ENCODE measurements at regions of chr12 and their contacts with region 1.

Region 1: DNA sequence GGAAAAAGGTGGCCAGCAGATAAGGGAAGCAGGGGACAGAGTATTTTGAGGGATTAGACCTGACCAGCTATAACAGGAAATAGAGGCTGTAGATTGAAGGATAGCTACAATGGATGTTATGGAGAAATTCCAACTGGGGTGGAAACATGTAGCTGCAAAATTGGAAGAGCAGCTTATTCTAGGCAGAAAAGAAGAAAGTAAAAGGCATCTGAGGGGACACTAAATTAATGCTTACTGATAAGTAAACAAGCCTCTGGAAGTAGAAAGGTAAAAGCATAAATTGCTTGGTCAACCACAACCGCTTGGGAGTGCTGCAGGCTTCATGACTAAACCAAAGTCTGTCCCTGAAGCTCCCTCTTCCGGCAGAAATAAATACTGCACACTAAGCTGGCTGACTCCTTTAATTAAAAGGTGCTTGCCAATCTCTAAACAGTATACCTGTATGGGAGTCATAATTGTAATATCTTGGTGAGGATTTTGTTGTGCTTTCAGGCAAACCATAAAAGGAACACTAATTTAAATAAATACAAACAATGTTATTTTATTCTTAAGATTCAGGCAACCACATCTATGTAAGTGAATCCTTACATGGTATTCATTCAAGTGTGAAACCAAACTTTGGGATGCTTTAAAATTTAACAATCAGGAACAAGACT is 7.7 kb downstream of the UBC start:
- DNase-seq: peak; percentile 86
- H3K4me3 Mint-ChIP-seq: no peak overlapping the region
- H3K27ac Mint-ChIP-seq: peak overlapping the region; percentile 1
- H3K4me1 Mint-ChIP-seq: peaks cover 36% of the 10 kb centered on the region
- H3K27me3 Mint-ChIP-seq: no peaks in the 10 kb centered on the region

Region 2: DNA sequence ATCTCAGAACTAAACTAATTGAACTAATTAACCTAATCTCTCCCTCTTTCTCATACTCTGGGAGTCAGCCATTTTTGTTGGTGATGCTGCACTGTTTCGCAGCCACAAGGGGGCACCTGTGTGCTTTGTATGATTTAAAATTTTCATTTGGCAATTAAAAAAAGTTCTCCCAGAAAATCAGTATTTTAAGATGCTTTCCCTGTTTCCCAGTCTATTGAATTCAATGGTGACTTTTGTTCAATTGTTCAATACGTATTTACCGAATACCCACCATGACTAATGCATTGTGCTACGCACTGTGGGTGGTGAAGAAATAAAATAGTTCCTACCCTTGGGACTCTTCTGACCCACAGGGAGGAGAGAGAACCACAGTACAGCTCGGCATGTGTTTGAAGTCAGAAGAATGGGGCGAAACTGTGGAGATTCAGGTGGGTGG is 870.0 kb before region 1 on chr12:
- intact Hi-C with region 1: loop called (anchors 2 kb)
- DNase-seq: no peak
- H3K4me3 Mint-ChIP-seq: no peak overlapping the region
- H3K27ac Mint-ChIP-seq: no peak overlapping the region
- H3K4me1 Mint-ChIP-seq: no peaks in the 10 kb centered on the region
- H3K27me3 Mint-ChIP-seq: peaks cover 14% of the 10 kb centered on the region

Region 3: DNA sequence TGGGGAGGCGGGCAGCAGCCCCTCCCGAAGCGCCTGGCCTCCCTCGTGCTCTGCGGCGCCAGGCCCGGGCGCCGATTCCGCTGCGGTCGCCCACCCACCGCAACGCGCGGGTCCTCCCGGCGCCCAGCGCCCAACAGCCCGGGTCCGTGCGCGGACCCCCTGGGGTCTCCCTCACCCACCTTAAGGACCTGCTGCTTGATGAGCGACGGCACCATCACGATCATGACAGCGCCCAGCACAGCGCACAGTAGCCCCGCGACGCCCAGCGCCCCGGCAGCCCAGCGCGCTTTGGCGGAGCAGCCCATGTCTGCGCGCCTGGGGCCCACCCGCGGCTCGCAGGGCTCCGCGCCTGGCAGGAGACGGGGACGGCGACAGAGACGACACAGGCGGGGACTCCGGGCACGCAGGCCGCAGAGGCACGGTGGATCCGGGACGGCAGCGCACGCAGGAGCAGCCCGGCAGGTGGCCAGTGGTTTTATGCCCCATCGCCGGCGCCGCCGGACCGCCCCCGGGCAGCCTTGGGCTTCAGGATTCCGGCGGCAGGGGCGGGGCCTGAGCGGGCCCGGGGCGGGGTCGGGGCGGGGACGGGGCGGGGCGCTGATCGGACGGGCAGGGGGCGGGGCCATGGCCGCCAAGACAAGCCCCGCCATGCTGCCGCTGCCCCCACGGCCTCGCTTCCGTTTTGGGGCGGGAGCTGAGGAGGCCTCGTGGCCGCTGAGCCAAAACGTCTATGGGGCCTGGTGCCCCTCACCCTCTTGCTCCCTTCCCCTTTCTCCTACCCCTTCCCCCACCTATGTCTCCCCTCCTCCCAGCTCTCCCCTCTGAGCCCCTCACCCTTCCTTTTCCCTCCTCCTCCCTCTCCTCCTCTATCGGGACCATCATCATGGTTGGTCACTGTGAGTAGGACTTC is 43.1 kb before region 1 on chr12 and contains the start of gene SCARB1:
- intact Hi-C with region 1: loop called (anchors 1 kb)
- DNase-seq: peak; percentile 70
- H3K4me3 Mint-ChIP-seq: peak within 1 kb of the TSS; percentile 85
- H3K27ac Mint-ChIP-seq: peak within 1 kb of the TSS; percentile 90
- H3K4me1 Mint-ChIP-seq: peaks cover 23% of the 10 kb centered on the region
- H3K27me3 Mint-ChIP-seq: peaks cover 2% of the 10 kb centered on the region
- total RNA-seq, gene SCARB1: 17.9 and 18.5 TPM in 2 replicates

Region 4: GRCh38 chr12:124917135-124917840 is 10.6 kb after region 1 on chr12:
- intact Hi-C with region 1: loop called (anchors 1 kb)
- DNase-seq: peak; percentile 92
- H3K4me3 Mint-ChIP-seq: peak overlapping the region; percentile 97
- H3K27ac Mint-ChIP-seq: peak overlapping the region; percentile 100
- H3K4me1 Mint-ChIP-seq: peaks cover 84% of the 10 kb centered on the region
- H3K27me3 Mint-ChIP-seq: no peaks in the 10 kb centered on the region

Region 5: DNA sequence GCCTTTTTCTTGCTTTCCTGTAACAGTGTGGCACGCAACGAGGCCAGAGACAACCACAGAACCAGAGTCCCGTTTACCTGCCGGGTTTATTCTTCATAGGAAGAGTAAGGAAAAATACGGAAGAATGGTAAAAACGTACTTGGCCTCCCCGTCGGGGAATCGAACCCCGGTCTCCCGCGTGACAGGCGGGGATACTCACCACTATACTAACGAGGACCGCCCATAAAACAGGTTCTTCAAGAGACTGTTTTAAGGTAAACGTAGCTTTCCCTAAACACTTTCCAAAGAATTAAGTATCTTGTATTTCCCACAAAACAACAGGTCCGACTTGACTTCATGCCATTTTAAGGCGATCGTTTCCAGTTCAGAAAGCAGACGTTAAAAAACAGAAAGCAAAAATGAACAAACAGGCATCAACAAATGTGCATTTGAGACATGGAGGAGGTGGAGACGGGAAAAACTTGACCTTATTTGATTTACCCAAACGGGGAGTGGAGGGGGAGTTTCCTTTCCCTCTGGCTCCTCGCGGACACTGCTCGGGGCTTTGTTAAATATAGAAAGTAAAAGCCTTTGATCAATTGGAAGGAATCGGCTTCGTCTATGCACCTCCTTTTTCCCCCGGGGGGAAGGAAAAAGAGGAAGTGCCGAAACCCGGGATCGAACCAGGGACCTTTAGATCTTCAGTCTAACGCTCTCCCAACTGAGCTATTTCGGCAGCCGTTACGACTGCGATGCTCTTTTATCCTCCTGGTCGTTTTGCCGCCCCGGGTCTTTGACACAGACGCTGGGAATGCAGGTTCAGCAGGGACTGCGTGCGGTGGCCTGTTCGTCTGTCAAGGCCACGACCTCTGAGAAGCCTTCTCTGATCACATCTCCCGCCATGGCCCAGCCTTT is 20.7 kb after region 1 on chr12:
- intact Hi-C with region 1: loop called (anchors 1 kb)
- DNase-seq: peak; percentile 88
- H3K4me3 Mint-ChIP-seq: peak overlapping the region; percentile 88
- H3K27ac Mint-ChIP-seq: peak overlapping the region; percentile 98
- H3K4me1 Mint-ChIP-seq: peaks cover 42% of the 10 kb centered on the region
- H3K27me3 Mint-ChIP-seq: peaks cover 9% of the 10 kb centered on the region

Region 6: GRCh38 chr12:124940549-124941527 is 34.1 kb after region 1 on chr12:
- intact Hi-C with region 1: loop called (anchors 1 kb)
- DNase-seq: peak; percentile 80
- H3K4me3 Mint-ChIP-seq: no peak overlapping the region
- H3K27ac Mint-ChIP-seq: no peak overlapping the region
- H3K4me1 Mint-ChIP-seq: no peaks in the 10 kb centered on the region
- H3K27me3 Mint-ChIP-seq: no peaks in the 10 kb centered on the region

Region 7: GRCh38 chr12:125049093-125049458 is 142.3 kb after region 1 on chr12:
- intact Hi-C with region 1: loop called (anchors 5 kb)
- DNase-seq: no peak
- H3K4me3 Mint-ChIP-seq: peak overlapping the region; percentile 88
- H3K27ac Mint-ChIP-seq: peak overlapping the region; percentile 75
- H3K4me1 Mint-ChIP-seq: peaks cover 13% of the 10 kb centered on the region
- H3K27me3 Mint-ChIP-seq: no peaks in the 10 kb centered on the region